ENCODE measurements at regions of chr6 and their contacts with region 1.

Region 1: GRCh38 chr6:95091823-95092436 is 485.4 kb upstream of the MANEA start:
- DNase-seq: no peak
- H3K4me3 Mint-ChIP-seq: no peak overlapping the region
- H3K27ac Mint-ChIP-seq: no peak overlapping the region
- H3K4me1 Mint-ChIP-seq: peaks cover 17% of the 10 kb centered on the region
- H3K27me3 Mint-ChIP-seq: no peaks in the 10 kb centered on the region
- CTCF ChIP-seq: no peak

Region 2: GRCh38 chr6:94636780-94637385 is 455.0 kb before region 1 on chr6:
- CTCF ChIA-PET with region 1: no interaction called
- intact Hi-C with region 1: loop called (anchors 1 kb)
- DNase-seq: no peak
- H3K4me3 Mint-ChIP-seq: no peak overlapping the region
- H3K27ac Mint-ChIP-seq: no peak overlapping the region
- H3K4me1 Mint-ChIP-seq: peaks cover 6% of the 10 kb centered on the region
- H3K27me3 Mint-ChIP-seq: no peaks in the 10 kb centered on the region
- CTCF ChIP-seq: no peak

Region 3: GRCh38 chr6:94651239-94651638 is 440.7 kb before region 1 on chr6:
- CTCF ChIA-PET with region 1: no interaction called
- intact Hi-C with region 1: no loop called
- DNase-seq: no peak
- H3K4me3 Mint-ChIP-seq: no peak overlapping the region
- H3K27ac Mint-ChIP-seq: no peak overlapping the region
- H3K4me1 Mint-ChIP-seq: no peaks in the 10 kb centered on the region
- H3K27me3 Mint-ChIP-seq: no peaks in the 10 kb centered on the region
- CTCF ChIP-seq: no peak

Region 4: GRCh38 chr6:94713446-94713845 is 378.5 kb before region 1 on chr6:
- CTCF ChIA-PET with region 1: no interaction called
- intact Hi-C with region 1: no loop called
- DNase-seq: no peak
- H3K4me3 Mint-ChIP-seq: no peak overlapping the region
- H3K27ac Mint-ChIP-seq: no peak overlapping the region
- H3K4me1 Mint-ChIP-seq: no peaks in the 10 kb centered on the region
- H3K27me3 Mint-ChIP-seq: no peaks in the 10 kb centered on the region
- CTCF ChIP-seq: no peak

Region 5: GRCh38 chr6:94894300-94894699 is 197.6 kb before region 1 on chr6:
- CTCF ChIA-PET with region 1: no interaction called
- intact Hi-C with region 1: no loop called
- DNase-seq: no peak
- H3K4me3 Mint-ChIP-seq: no peak overlapping the region
- H3K27ac Mint-ChIP-seq: no peak overlapping the region
- H3K4me1 Mint-ChIP-seq: no peaks in the 10 kb centered on the region
- H3K27me3 Mint-ChIP-seq: no peaks in the 10 kb centered on the region
- CTCF ChIP-seq: no peak

Region 6: DNA sequence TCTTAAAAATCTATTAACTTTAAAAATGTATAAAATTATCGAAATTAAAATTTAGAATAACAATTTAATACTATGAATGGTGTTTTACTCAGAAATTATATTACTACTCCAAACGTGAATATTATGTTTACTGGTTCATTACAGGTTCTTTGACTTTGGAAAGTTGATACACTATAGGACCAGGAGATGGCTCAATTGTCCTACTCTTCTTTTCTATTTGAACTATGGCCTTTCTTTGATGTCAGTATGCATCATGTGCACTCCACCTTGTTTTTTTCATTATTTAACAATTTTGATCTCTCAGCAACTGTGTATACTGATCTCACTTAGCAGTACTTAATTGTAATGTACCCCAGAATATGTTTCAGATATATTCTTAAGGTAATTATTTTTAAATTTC is 93.9 kb after region 1 on chr6:
- CTCF ChIA-PET with region 1: no interaction called
- intact Hi-C with region 1: loop called (anchors 5 kb)
- DNase-seq: no peak
- H3K4me3 Mint-ChIP-seq: no peak overlapping the region
- H3K27ac Mint-ChIP-seq: no peak overlapping the region
- H3K4me1 Mint-ChIP-seq: peaks cover 8% of the 10 kb centered on the region
- H3K27me3 Mint-ChIP-seq: no peaks in the 10 kb centered on the region
- CTCF ChIP-seq: no peak

Measured in Calu3 (cell line).